ENCODE measurements at regions of chr2 and their contacts with region 1.

Region 1: GRCh38 chr2:100262555-100263320 is 59.6 kb downstream of the LONRF2 start:
- DNase-seq: peak; percentile 70 to 91
- ATAC-seq: peak; percentile 83
- H3K4me3 ChIP-seq: no peak overlapping the region
- H3K27ac ChIP-seq: no peak overlapping the region
- H3K4me1 ChIP-seq: no peaks in the 10 kb centered on the region
- H3K27me3 ChIP-seq: no peaks in the 10 kb centered on the region

Region 2: DNA sequence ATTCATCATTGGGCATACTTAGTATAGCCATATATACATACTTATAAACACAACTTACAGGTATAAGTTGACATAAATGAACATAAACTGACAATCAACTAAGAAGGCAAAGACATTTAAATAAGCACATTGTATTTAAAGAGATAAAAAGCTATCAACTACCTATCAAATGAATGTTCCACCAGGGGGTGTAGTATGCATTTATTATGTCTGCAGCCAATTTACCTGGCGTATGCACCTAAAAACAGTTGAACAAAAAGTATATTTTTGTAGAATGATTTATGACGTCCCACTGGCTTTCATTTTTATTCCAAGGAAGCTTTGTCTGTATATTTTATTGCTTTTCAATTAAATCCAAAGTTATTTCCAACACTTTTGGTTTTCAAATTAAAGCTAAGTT is 443.9 kb before region 1 on chr2:
- intact Hi-C with region 1: loop called in 1 of 2 experiments (anchors 10 kb)
- DNase-seq: no peak
- ATAC-seq: no peak
- H3K4me3 ChIP-seq: no peak overlapping the region
- H3K27ac ChIP-seq: no peak overlapping the region
- H3K4me1 ChIP-seq: no peaks in the 10 kb centered on the region
- H3K27me3 ChIP-seq: no peaks in the 10 kb centered on the region

Region 3: DNA sequence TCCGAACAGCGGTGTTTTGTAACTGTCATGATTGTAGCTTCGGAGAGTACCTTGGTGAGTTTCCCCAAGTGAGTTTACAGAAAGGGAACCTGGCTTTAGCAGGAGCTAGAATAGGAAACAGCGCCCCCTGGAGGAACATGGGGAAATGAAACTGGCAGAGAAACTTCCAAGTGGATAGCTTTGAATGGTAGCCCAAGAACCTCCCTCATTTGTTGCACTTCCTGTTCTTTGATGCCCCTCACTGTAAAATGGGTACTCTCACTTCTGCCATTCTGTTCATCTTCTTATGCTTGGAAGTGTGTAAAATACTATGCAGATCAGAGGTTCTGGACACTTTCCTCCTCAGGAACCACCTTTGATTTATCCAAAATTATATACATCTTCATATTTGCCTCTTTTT is 118.5 kb after region 1 on chr2:
- intact Hi-C with region 1: loop called (anchors 1 to 2 kb)
- DNase-seq: peak; percentile 87 to 88
- ATAC-seq: peak; percentile 59
- H3K4me3 ChIP-seq: no peak overlapping the region
- H3K27ac ChIP-seq: no peak overlapping the region
- H3K4me1 ChIP-seq: no peaks in the 10 kb centered on the region
- H3K27me3 ChIP-seq: no peaks in the 10 kb centered on the region

Measured in aorta (tissue), 5 donors.